ENCODE measurements at regions of chr11 and their contacts with region 1.

Region 1: DNA sequence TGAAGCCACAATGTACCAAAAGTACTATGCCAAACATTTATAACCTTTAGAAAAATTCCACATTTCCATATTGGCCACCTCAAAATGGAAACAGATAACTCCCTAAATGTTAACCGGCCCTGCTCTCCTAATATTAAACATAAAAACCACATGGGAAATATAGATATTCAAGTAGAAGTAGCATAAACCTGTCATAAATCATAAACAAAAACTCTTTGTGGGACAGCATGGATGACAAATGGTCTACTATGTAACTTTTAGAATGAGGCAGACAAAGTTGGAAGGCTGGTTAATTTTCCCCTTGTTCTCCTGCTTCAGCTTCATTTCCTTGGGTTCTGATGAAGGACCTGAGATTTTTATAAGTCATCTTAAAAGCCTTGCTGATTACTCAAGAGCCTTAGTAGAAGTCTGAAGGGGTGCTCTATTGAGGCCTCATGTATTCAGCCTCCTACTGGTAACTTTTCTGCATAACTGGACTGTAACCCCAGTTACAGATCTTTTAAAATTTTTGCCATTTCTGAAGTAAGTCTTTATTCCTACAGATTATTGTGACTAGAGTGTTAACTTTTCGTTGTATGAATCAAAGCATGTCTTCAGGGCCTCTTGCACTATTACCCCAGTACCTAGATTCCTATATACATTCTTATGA is 116.4 kb downstream of the STIM1 start:
- DNase-seq: peak in 2 of 9 experiments; percentile 14 to 42
- ATAC-seq: peak; percentile 52
- H3K4me3 ChIP-seq: no peak overlapping the region
- H3K4me3 Mint-ChIP-seq: no peak overlapping the region
- H3K27ac ChIP-seq: no peak overlapping the region
- H3K27ac Mint-ChIP-seq: peak overlapping the region; percentile 7
- H3K4me1 ChIP-seq: peaks cover 39% of the 10 kb centered on the region
- H3K4me1 Mint-ChIP-seq: peaks cover 70% of the 10 kb centered on the region
- H3K27me3 ChIP-seq: no peaks in the 10 kb centered on the region
- H3K27me3 Mint-ChIP-seq: no peaks in the 10 kb centered on the region
- CTCF ChIP-seq: no peak

Region 2: GRCh38 chr11:3767536-3767935 is 204.3 kb before region 1 on chr11:
- CTCF ChIA-PET with region 1: no interaction called
- POLR2A ChIA-PET with region 1: no interaction called
- intact Hi-C with region 1: no loop called
- DNase-seq: no peak
- ATAC-seq: no peak
- H3K4me3 ChIP-seq: no peak overlapping the region
- H3K4me3 Mint-ChIP-seq: no peak overlapping the region
- H3K27ac ChIP-seq: no peak overlapping the region
- H3K27ac Mint-ChIP-seq: no peak overlapping the region
- H3K4me1 ChIP-seq: no peaks in the 10 kb centered on the region
- H3K4me1 Mint-ChIP-seq: no peaks in the 10 kb centered on the region
- H3K27me3 ChIP-seq: no peaks in the 10 kb centered on the region
- H3K27me3 Mint-ChIP-seq: no peaks in the 10 kb centered on the region
- CTCF ChIP-seq: no peak

Region 3: DNA sequence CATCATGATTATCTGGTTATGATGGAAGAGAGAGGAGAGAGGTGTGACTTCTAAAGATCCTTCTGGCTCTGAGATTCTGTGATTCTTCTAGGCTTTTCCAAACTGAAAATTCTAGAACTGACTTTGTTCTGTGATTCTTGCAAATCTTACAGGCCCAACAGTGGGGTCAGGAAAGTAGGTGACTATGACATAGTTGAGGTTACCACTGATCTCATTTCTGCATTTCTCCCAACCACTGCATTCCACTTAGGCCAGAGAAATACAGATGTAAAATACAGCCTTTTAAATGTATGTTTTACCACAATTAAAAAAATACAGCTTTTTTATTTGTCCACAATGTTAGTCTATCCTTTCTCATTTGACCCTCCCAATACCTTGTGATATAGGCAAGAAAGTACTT is 32.7 kb before region 1 on chr11:
- CTCF ChIA-PET with region 1: interaction called, 3 read pairs
- POLR2A ChIA-PET with region 1: interaction called, 3 read pairs
- intact Hi-C with region 1: loop called in 1 of 2 experiments (anchors 5 kb)
- DNase-seq: no peak
- ATAC-seq: peak; percentile 26
- H3K4me3 ChIP-seq: no peak overlapping the region
- H3K4me3 Mint-ChIP-seq: no peak overlapping the region
- H3K27ac ChIP-seq: no peak overlapping the region
- H3K27ac Mint-ChIP-seq: peak overlapping the region; percentile 78
- H3K4me1 ChIP-seq: peaks cover 61% of the 10 kb centered on the region
- H3K4me1 Mint-ChIP-seq: peaks cover 92% of the 10 kb centered on the region
- H3K27me3 ChIP-seq: no peaks in the 10 kb centered on the region
- H3K27me3 Mint-ChIP-seq: no peaks in the 10 kb centered on the region
- CTCF ChIP-seq: no peak

Region 4: GRCh38 chr11:3954448-3955298 is 17.2 kb before region 1 on chr11:
- CTCF ChIA-PET with region 1: interaction called, 5 read pairs
- POLR2A ChIA-PET with region 1: interaction called, 7 read pairs
- intact Hi-C with region 1: loop called in 1 of 2 experiments (anchors 2 kb)
- DNase-seq: no peak
- ATAC-seq: no peak
- H3K4me3 ChIP-seq: no peak overlapping the region
- H3K4me3 Mint-ChIP-seq: peak overlapping the region; percentile 1
- H3K27ac ChIP-seq: no peak overlapping the region
- H3K27ac Mint-ChIP-seq: peak overlapping the region; percentile 95
- H3K4me1 ChIP-seq: peaks cover 68% of the 10 kb centered on the region
- H3K4me1 Mint-ChIP-seq: peaks cover 85% of the 10 kb centered on the region
- H3K27me3 ChIP-seq: no peaks in the 10 kb centered on the region
- H3K27me3 Mint-ChIP-seq: no peaks in the 10 kb centered on the region
- CTCF ChIP-seq: no peak

Region 5: GRCh38 chr11:4393209-4393857 is 421.5 kb after region 1 on chr11 and contains the start of gene TRIM21:
- CTCF ChIA-PET with region 1: no interaction called
- POLR2A ChIA-PET with region 1: no interaction called
- intact Hi-C with region 1: loop called in 1 of 2 experiments (anchors 5 kb)
- DNase-seq: peak; percentile 78 to 93 (median 88)
- ATAC-seq: peak; percentile 99
- H3K4me3 ChIP-seq: peak within 1 kb of the TSS; percentile 81 to 89
- H3K4me3 Mint-ChIP-seq: peak within 1 kb of the TSS; percentile 94
- H3K27ac ChIP-seq: peak within 1 kb of the TSS; percentile 82 to 89
- H3K27ac Mint-ChIP-seq: peak within 1 kb of the TSS; percentile 95
- H3K4me1 ChIP-seq: peaks cover 18% of the 10 kb centered on the region
- H3K4me1 Mint-ChIP-seq: peaks cover 43% of the 10 kb centered on the region
- H3K27me3 ChIP-seq: no peaks in the 10 kb centered on the region
- H3K27me3 Mint-ChIP-seq: no peaks in the 10 kb centered on the region
- CTCF ChIP-seq: no peak
- total RNA-seq, gene TRIM21: 23.4 to 23.6 TPM

Region 6: GRCh38 chr11:4480574-4481566 is 509.0 kb after region 1 on chr11:
- CTCF ChIA-PET with region 1: no interaction called
- POLR2A ChIA-PET with region 1: no interaction called
- intact Hi-C with region 1: no loop called
- DNase-seq: no peak
- ATAC-seq: no peak
- H3K4me3 ChIP-seq: no peak overlapping the region
- H3K4me3 Mint-ChIP-seq: no peak overlapping the region
- H3K27ac ChIP-seq: no peak overlapping the region
- H3K27ac Mint-ChIP-seq: no peak overlapping the region
- H3K4me1 ChIP-seq: no peaks in the 10 kb centered on the region
- H3K4me1 Mint-ChIP-seq: no peaks in the 10 kb centered on the region
- H3K27me3 ChIP-seq: no peaks in the 10 kb centered on the region
- H3K27me3 Mint-ChIP-seq: peaks cover 3% of the 10 kb centered on the region
- CTCF ChIP-seq: no peak